CD8-positive, alpha-beta T cell (primary cell): ENCODE measurements at regions of chr14 and their contacts with region 1.

Region 1: GRCh38 chr14:92748259-92749016 is at the start of gene LGMN:
- DNase-seq: peak; percentile 64 to 90 (median 83)
- ATAC-seq: peak; percentile 95
- H3K4me3 ChIP-seq: peak within 1 kb of the TSS; percentile 53 to 78
- H3K4me3 Mint-ChIP-seq: peak within 1 kb of the TSS; percentile 90
- H3K27ac ChIP-seq: peak within 1 kb of the TSS in 1 of 2 experiments; percentile 31
- H3K27ac Mint-ChIP-seq: peak within 1 kb of the TSS; percentile 88
- H3K4me1 ChIP-seq: peaks cover 22% of the 10 kb centered on the region
- H3K4me1 Mint-ChIP-seq: peaks cover 46% of the 10 kb centered on the region
- H3K27me3 ChIP-seq: peaks cover 0 to 9% of the 10 kb centered on the region in 2 experiments
- H3K27me3 Mint-ChIP-seq: peaks cover 2% of the 10 kb centered on the region
- CTCF ChIP-seq: no peak
- total RNA-seq, gene LGMN: 2.4 to 3.4 TPM

Region 2: GRCh38 chr14:92793709-92794546 is 45.5 kb after region 1 on chr14 and contains the start of gene GOLGA5:
- CTCF ChIA-PET with region 1: no interaction called
- POLR2A ChIA-PET with region 1: interaction called, 10 read pairs
- intact Hi-C with region 1: loop called (anchors 1 kb)
- DNase-seq: peak; percentile 97 to 99 (median 98)
- ATAC-seq: peak; percentile 94
- H3K4me3 ChIP-seq: peak within 1 kb of the TSS; percentile 92 to 99
- H3K4me3 Mint-ChIP-seq: peak within 1 kb of the TSS; percentile 97
- H3K27ac ChIP-seq: peak within 1 kb of the TSS; percentile 88 to 92
- H3K27ac Mint-ChIP-seq: peak within 1 kb of the TSS; percentile 97
- H3K4me1 ChIP-seq: peaks cover 27% of the 10 kb centered on the region
- H3K4me1 Mint-ChIP-seq: peaks cover 38% of the 10 kb centered on the region
- H3K27me3 ChIP-seq: no peaks in the 10 kb centered on the region
- H3K27me3 Mint-ChIP-seq: no peaks in the 10 kb centered on the region
- CTCF ChIP-seq: no peak
- total RNA-seq, gene GOLGA5: 4.5 to 5.9 TPM

Region 3: DNA sequence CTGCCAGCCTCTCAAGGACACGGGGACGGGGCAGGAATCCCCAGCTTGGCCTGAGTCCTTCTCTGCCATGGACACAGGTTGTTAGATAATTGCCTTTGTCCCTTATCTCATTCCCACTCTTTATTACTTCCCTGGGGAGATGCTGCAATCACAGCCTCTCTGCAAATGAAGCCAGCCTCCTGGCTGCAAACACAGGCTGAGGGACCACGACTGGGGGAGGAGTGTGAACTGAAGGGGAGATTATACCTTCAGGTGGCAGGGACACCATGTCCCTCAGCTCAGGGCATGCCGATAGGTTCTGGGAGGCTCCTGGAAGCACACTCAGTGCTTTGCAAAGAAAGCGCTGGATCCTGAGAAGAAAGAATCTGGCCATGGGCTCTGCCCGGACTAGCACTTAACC is 158.4 kb after region 1 on chr14:
- CTCF ChIA-PET with region 1: no interaction called
- POLR2A ChIA-PET with region 1: no interaction called
- intact Hi-C with region 1: no loop called
- DNase-seq: no peak
- ATAC-seq: no peak
- H3K4me3 ChIP-seq: no peak overlapping the region
- H3K4me3 Mint-ChIP-seq: no peak overlapping the region
- H3K27ac ChIP-seq: no peak overlapping the region
- H3K27ac Mint-ChIP-seq: no peak overlapping the region
- H3K4me1 ChIP-seq: peaks cover 18% of the 10 kb centered on the region
- H3K4me1 Mint-ChIP-seq: peaks cover 16% of the 10 kb centered on the region
- H3K27me3 ChIP-seq: peaks cover 0 to 3% of the 10 kb centered on the region in 2 experiments
- H3K27me3 Mint-ChIP-seq: peaks cover 5% of the 10 kb centered on the region
- CTCF ChIP-seq: no peak